ENCODE measurements at regions of chr19 and their contacts with region 1.

Region 1: GRCh38 chr19:33383722-33384292 is 10.3 kb downstream of the CEBPG start:
- DNase-seq: no peak
- H3K4me3 ChIP-seq: no peak overlapping the region
- H3K27ac ChIP-seq: no peak overlapping the region
- H3K4me1 ChIP-seq: peaks cover 0 to 14% of the 10 kb centered on the region in 2 experiments; a peak in 1 of 4 replicates
- H3K27me3 ChIP-seq: no peaks in the 10 kb centered on the region
- CTCF ChIP-seq: no peak
- EP300 ChIP-seq: no peak
- RAD21 ChIP-seq: no peak

Region 2: GRCh38 chr19:33394006-33394849 is 10.4 kb after region 1 on chr19:
- CTCF ChIA-PET with region 1: interaction called, 12 read pairs
- POLR2A ChIA-PET with region 1: no interaction called
- DNase-seq: peak; percentile 38
- H3K4me3 ChIP-seq: no peak overlapping the region
- H3K27ac ChIP-seq: no peak overlapping the region
- H3K4me1 ChIP-seq: peaks cover 0 to 33% of the 10 kb centered on the region in 2 experiments; a peak in 1 of 4 replicates
- H3K27me3 ChIP-seq: no peaks in the 10 kb centered on the region
- CTCF ChIP-seq: no peak
- EP300 ChIP-seq: no peak
- RAD21 ChIP-seq: no peak